Caco-2 (cell line): ENCODE measurements at regions of chr1 and their contacts with region 1.

Region 1: GRCh38 chr1:164786980-164787833 is 228.2 kb downstream of the PBX1 start:
- DNase-seq: peak; percentile 82 to 86
- H3K4me3 ChIP-seq: no peak overlapping the region
- H3K4me3 Mint-ChIP-seq: peak overlapping the region; percentile 25
- H3K27ac Mint-ChIP-seq: peak overlapping the region; percentile 45
- H3K4me1 ChIP-seq: peaks cover 23% of the 10 kb centered on the region
- H3K4me1 Mint-ChIP-seq: peaks cover 23% of the 10 kb centered on the region
- H3K27me3 ChIP-seq: no peaks in the 10 kb centered on the region
- H3K27me3 Mint-ChIP-seq: no peaks in the 10 kb centered on the region
- CTCF ChIP-seq: peak; percentile 84 to 87

Region 2: GRCh38 chr1:164163289-164163864 is 623.8 kb before region 1 on chr1:
- CTCF ChIA-PET with region 1: no interaction called
- POLR2A ChIA-PET with region 1: no interaction called
- intact Hi-C with region 1: loop called (anchors 1 kb)
- DNase-seq: no peak
- H3K4me3 ChIP-seq: no peak overlapping the region
- H3K4me3 Mint-ChIP-seq: no peak overlapping the region
- H3K27ac Mint-ChIP-seq: no peak overlapping the region
- H3K4me1 ChIP-seq: no peaks in the 10 kb centered on the region
- H3K4me1 Mint-ChIP-seq: no peaks in the 10 kb centered on the region
- H3K27me3 ChIP-seq: no peaks in the 10 kb centered on the region; the same call in 1 of the 2 replicates
- H3K27me3 Mint-ChIP-seq: peaks cover 15% of the 10 kb centered on the region
- CTCF ChIP-seq: no peak

Region 3: DNA sequence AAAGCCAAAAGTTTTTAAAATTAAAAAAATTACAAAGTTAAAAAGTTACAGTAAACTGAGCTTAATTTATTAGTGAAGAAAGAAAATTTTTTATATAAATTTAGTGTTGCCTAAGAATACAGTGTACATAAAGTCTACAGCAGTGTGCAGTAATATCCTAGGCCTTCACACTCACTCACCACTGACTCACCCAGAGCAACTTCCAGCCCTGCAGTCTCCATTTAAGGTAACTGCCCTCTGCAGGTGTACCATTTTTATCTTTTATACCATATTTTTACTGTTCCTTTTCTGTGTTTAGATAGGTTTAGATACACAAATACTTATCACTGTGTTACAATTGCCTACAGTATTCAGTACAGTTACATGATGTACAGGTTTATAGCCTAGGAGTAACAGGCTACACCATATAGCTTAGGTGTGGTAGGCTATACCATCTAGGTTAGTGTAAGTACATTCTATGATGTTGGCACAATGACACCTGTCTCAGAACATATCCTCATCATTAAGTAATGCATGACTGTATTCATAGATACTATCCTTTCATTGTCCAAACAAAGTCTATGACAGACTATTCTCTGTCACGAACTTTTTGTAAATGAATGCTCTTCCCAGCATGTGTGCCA is 306.8 kb before region 1 on chr1:
- CTCF ChIA-PET with region 1: no interaction called
- POLR2A ChIA-PET with region 1: no interaction called
- intact Hi-C with region 1: no loop called
- DNase-seq: no peak
- H3K4me3 ChIP-seq: no peak overlapping the region
- H3K4me3 Mint-ChIP-seq: no peak overlapping the region
- H3K27ac Mint-ChIP-seq: no peak overlapping the region
- H3K4me1 ChIP-seq: no peaks in the 10 kb centered on the region
- H3K4me1 Mint-ChIP-seq: no peaks in the 10 kb centered on the region
- H3K27me3 ChIP-seq: no peaks in the 10 kb centered on the region
- H3K27me3 Mint-ChIP-seq: no peaks in the 10 kb centered on the region
- CTCF ChIP-seq: no peak

Region 4: GRCh38 chr1:164518692-164519332 is 268.4 kb before region 1 on chr1:
- CTCF ChIA-PET with region 1: no interaction called
- POLR2A ChIA-PET with region 1: no interaction called
- intact Hi-C with region 1: loop called (anchors 2 kb)
- DNase-seq: peak in 1 of 2 experiments; percentile 13
- H3K4me3 ChIP-seq: no peak overlapping the region
- H3K4me3 Mint-ChIP-seq: no peak overlapping the region
- H3K27ac Mint-ChIP-seq: no peak overlapping the region
- H3K4me1 ChIP-seq: no peaks in the 10 kb centered on the region
- H3K4me1 Mint-ChIP-seq: no peaks in the 10 kb centered on the region
- H3K27me3 ChIP-seq: no peaks in the 10 kb centered on the region
- H3K27me3 Mint-ChIP-seq: no peaks in the 10 kb centered on the region
- CTCF ChIP-seq: peak in 1 of 2 experiments; percentile 21

Region 5: GRCh38 chr1:164602480-164603093 is 184.6 kb before region 1 on chr1:
- CTCF ChIA-PET with region 1: no interaction called
- POLR2A ChIA-PET with region 1: no interaction called
- intact Hi-C with region 1: loop called (anchors 1 kb)
- DNase-seq: peak in 1 of 2 experiments; percentile 41
- H3K4me3 ChIP-seq: peak overlapping the region; percentile 15; the same call in 1 of the 2 replicates
- H3K4me3 Mint-ChIP-seq: peak overlapping the region; percentile 77
- H3K27ac Mint-ChIP-seq: peak overlapping the region; percentile 93
- H3K4me1 ChIP-seq: peaks cover 53% of the 10 kb centered on the region
- H3K4me1 Mint-ChIP-seq: peaks cover 42% of the 10 kb centered on the region
- H3K27me3 ChIP-seq: no peaks in the 10 kb centered on the region
- H3K27me3 Mint-ChIP-seq: no peaks in the 10 kb centered on the region
- CTCF ChIP-seq: no peak

Region 6: GRCh38 chr1:164651351-164651951 is 135.8 kb before region 1 on chr1:
- CTCF ChIA-PET with region 1: no interaction called
- POLR2A ChIA-PET with region 1: no interaction called
- intact Hi-C with region 1: no loop called
- DNase-seq: peak; percentile 34 to 72
- H3K4me3 ChIP-seq: no peak overlapping the region
- H3K4me3 Mint-ChIP-seq: no peak overlapping the region
- H3K27ac Mint-ChIP-seq: peak overlapping the region; percentile 80
- H3K4me1 ChIP-seq: peaks cover 75% of the 10 kb centered on the region
- H3K4me1 Mint-ChIP-seq: peaks cover 68% of the 10 kb centered on the region
- H3K27me3 ChIP-seq: no peaks in the 10 kb centered on the region
- H3K27me3 Mint-ChIP-seq: no peaks in the 10 kb centered on the region
- CTCF ChIP-seq: no peak

Region 7: DNA sequence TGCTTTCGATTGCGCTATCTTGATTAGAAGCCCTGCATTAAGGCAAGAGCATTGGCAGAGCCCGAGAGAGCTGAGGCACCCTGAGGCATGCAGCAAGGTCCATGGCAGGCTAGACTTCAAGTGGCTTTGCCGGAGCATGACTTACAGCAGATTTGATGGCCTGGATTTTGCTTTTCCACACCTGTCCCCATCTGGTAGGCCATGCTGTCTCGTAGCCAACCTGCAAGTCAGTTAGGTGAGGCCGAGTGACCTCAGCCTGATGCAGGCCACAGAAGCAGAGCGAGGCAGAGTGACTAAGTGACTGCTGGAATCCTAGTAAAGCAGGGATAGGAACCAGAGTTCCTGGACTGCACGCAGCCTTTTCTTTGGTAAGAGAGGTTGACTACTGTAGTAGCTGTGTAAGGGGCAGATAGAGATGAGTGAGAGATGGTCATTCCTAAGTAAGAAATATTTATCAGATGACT is 79.3 kb before region 1 on chr1:
- CTCF ChIA-PET with region 1: interaction called, 3 read pairs
- POLR2A ChIA-PET with region 1: no interaction called
- intact Hi-C with region 1: loop called (anchors 1 kb)
- DNase-seq: no peak
- H3K4me3 ChIP-seq: no peak overlapping the region
- H3K4me3 Mint-ChIP-seq: no peak overlapping the region
- H3K27ac Mint-ChIP-seq: no peak overlapping the region
- H3K4me1 ChIP-seq: peaks cover 19% of the 10 kb centered on the region
- H3K4me1 Mint-ChIP-seq: peaks cover 16% of the 10 kb centered on the region
- H3K27me3 ChIP-seq: no peaks in the 10 kb centered on the region
- H3K27me3 Mint-ChIP-seq: no peaks in the 10 kb centered on the region
- CTCF ChIP-seq: no peak

Region 8: DNA sequence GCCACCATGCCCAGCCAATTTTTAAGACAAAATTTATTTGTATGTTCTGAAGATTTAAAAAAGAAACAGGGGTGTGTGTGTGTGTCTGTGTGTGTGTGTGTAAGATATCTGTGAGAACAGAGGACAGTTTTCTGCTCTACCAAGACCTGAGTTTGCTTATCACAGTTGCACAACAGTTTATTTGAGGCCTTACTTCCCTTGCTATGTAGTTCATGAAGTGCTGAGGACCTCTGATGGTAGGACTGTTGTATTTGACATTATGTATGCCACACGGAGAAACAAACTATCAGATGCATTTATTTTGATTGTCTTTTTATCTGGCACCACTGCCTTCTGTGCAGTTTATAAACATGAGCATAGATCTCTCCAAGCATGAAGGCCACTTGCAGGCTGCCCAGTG is 127.0 kb after region 1 on chr1:
- CTCF ChIA-PET with region 1: no interaction called
- POLR2A ChIA-PET with region 1: no interaction called
- intact Hi-C with region 1: loop called (anchors 1 kb)
- DNase-seq: peak in 1 of 2 experiments; percentile 39
- H3K4me3 ChIP-seq: no peak overlapping the region
- H3K4me3 Mint-ChIP-seq: no peak overlapping the region
- H3K27ac Mint-ChIP-seq: no peak overlapping the region
- H3K4me1 ChIP-seq: no peaks in the 10 kb centered on the region
- H3K4me1 Mint-ChIP-seq: no peaks in the 10 kb centered on the region
- H3K27me3 ChIP-seq: no peaks in the 10 kb centered on the region; the same call in 1 of the 2 replicates
- H3K27me3 Mint-ChIP-seq: peaks cover 6% of the 10 kb centered on the region
- CTCF ChIP-seq: peak; percentile 17 to 32